ENCODE measurements at regions of chr14 and their contacts with region 1.

Region 1: DNA sequence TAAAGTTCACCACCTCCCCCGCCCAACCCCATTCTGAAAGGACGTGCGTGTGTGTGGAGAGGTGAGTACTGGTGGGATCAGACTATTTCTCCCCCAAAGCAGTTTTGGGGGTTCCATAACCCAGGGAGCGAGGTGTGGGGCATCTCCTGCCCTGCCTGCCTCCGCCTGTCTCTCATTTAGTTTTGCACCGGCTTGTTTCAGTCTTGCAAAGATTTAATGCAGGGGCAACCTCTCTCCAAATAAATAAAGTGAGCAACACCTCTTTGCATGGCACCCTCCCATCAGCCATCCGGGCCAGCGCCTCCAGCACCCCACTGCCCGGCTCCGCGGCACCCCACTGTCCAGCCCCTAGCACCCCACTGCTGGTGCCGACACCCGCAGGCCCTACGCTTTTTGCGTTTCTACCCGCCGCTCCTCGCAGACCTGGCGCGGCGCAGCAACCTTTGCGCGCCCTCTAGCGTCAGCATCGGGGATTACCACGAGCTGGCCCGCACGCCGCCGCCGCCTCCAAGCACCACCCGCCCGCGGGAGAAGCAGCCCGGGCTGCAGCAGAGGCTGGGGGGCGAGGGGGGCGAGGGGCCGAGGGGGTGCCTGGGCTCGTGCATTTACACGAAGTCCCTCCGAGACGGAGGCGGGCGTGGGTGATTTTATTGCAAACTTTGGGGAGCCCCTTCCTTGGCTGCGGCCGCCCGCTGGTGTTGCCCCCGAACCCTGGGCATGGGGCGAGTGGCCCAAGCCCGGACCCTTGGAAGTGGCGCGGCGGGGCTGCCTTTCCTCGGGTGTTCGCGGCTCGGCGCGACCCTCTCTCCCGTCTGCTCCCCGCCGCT is 55.8 kb upstream of the VRK1 start:
- DNase-seq: peak; percentile 71 to 83 (median 77)
- H3K4me3 ChIP-seq: peak overlapping the region; percentile 20 to 49 (median 28)
- H3K27ac ChIP-seq: no peak overlapping the region
- H3K4me1 ChIP-seq: no peaks in the 10 kb centered on the region
- H3K27me3 ChIP-seq: peaks cover 32% of the 10 kb centered on the region
- CTCF ChIP-seq: peak; percentile 88

Region 2: DNA sequence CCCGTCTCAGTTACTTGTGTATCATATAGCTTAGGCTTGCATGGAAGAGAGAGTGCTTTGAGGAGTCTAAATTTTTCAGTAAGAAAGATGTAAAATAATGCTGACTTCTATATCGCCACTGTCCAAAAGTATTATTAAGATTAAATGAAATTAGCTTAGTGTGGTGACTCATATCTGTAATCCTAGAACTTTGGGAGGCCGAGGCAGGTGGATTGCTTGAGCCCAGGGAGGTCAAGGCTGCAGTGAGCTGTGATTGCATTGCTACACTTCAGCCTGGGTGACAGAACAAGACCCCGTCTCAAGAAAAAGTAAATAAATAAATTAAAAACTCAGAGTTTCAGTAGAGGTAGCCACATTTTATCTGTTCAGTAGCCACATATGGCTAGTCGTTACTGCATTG is 215.9 kb before region 1 on chr14:
- intact Hi-C with region 1: no loop called
- DNase-seq: no peak
- H3K4me3 ChIP-seq: no peak overlapping the region
- H3K27ac ChIP-seq: no peak overlapping the region
- H3K4me1 ChIP-seq: no peaks in the 10 kb centered on the region
- H3K27me3 ChIP-seq: no peaks in the 10 kb centered on the region
- CTCF ChIP-seq: no peak

Region 3: DNA sequence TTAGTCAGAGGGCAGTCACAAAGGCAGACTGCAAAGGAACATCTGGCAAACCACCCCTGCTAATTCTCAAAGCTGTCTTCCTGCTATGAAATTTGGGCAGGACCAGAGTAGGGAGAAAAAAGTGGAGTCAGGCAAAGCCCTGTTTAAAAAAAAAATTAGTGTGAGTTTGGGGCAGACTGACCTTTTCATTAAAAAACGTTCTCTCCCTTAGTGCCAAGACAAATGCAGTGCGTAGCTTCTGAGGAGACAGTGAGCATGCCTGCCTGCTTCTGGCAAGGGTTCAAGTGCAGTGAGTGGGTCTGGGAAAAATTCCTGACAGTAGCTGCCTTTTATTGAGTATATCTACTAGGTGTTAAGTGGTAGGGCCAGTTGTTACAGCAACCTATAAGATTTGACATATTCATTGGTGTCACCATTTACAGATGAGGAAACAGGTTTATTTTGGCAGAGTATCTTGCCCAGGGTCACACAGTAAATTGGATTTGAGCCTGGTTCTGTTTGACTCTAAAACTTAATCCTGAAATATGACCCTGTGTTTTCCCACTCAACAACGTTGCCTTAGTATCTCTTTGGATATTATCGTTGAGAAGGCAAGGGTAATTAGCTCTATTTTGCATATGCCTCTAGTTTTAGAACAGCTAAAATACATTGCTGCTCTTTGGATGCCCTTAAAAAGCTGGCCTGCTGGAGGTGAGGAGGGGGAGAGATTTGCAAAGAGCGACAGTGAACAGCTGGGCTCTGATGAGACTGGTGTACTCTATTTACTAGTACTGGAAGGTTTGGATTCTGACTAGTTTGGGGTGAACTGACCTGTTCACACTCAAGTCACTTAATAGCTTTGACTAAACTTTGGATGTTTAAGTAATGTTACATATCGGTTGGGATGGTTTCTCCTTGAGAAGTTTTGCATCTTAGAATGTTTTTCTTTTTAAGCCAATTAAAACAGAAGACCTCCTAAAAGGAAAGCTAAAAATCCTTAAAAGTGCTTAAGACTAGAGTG is 166.4 kb before region 1 on chr14:
- intact Hi-C with region 1: loop called (anchors 10 kb)
- DNase-seq: peak in 2 of 5 donors; percentile 55 to 60
- H3K4me3 ChIP-seq: no peak overlapping the region
- H3K27ac ChIP-seq: no peak overlapping the region
- H3K4me1 ChIP-seq: no peaks in the 10 kb centered on the region
- H3K27me3 ChIP-seq: no peaks in the 10 kb centered on the region
- CTCF ChIP-seq: no peak